SK-N-SH (cell line): ENCODE measurements at regions of chr7 and their contacts with region 1.

Region 1: GRCh38 chr7:43729214-43729923 is at the start of gene COA1:
- DNase-seq: peak; percentile 95
- H3K4me3 ChIP-seq: peak within 1 kb of the TSS; percentile 93 to 97
- H3K27ac ChIP-seq: peak within 1 kb of the TSS; percentile 68 to 95
- H3K4me1 ChIP-seq: peaks cover 0 to 7% of the 10 kb centered on the region in 2 experiments; a peak in 1 of 4 replicates
- H3K27me3 ChIP-seq: no peaks in the 10 kb centered on the region
- CTCF ChIP-seq: peak; percentile 19; the same call in 1 of the 2 replicates
- EP300 ChIP-seq: no peak; a peak in 1 of 4 replicates
- RAD21 ChIP-seq: no peak
- polyA plus RNA-seq, gene COA1: 42.8 and 66.3 TPM in 2 replicates

Region 2: GRCh38 chr7:43431020-43431595 is 298.3 kb before region 1 on chr7:
- CTCF ChIA-PET with region 1: no interaction called
- POLR2A ChIA-PET with region 1: no interaction called
- DNase-seq: no peak
- H3K4me3 ChIP-seq: no peak overlapping the region
- H3K27ac ChIP-seq: no peak overlapping the region
- H3K4me1 ChIP-seq: no peaks in the 10 kb centered on the region
- H3K27me3 ChIP-seq: no peaks in the 10 kb centered on the region; the same call in 1 of the 2 replicates
- CTCF ChIP-seq: no peak
- EP300 ChIP-seq: no peak
- RAD21 ChIP-seq: no peak

Region 3: DNA sequence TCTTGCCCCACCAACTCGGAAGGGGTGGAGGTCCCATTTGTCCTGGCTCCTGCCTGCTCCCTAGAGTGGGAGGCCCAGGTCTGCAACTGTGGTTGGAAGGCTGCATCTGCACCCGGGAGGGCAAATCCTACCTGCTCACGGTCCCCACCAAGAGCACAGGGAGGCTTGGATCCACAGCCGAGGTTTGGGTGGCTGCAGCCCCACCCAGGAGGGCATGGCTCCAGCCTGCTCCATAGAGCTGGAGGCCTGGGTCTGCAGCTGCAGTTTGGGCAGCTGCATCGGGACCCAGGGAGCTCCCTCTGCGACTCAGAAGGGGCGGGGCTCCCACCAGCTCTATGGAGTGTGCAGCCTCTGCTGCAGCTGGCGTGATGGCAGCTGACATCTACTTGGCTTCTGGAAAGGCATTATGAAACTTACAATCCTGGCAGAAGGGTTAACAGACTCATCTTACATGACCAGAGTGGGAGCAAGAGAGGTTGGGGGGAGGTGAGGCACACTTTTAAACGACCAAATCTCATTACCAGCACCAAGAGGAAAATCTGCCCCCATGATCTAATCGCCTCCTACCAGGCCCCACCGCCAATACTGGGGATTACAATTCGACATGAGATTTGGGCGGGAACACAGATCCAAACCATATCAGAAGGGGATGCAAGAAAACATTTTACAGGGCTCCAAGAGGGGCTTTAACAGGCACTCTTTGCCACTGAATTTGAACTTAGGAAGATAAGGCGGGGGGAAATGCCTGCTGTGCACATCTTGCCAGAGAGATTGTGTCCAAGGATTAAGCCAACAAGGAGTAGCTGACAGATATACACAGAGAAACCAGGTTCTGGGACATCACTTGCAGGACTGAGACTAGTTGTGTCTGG is 20.9 kb after region 1 on chr7:
- CTCF ChIA-PET with region 1: interaction called, 4 read pairs
- POLR2A ChIA-PET with region 1: interaction called, 11 read pairs
- DNase-seq: no peak
- H3K4me3 ChIP-seq: no peak overlapping the region
- H3K27ac ChIP-seq: no peak overlapping the region
- H3K4me1 ChIP-seq: peaks cover 0 to 3% of the 10 kb centered on the region in 2 experiments; a peak in 1 of 4 replicates
- H3K27me3 ChIP-seq: peaks cover 11% of the 10 kb centered on the region; the same call in 1 of the 2 replicates
- CTCF ChIP-seq: no peak
- EP300 ChIP-seq: no peak
- RAD21 ChIP-seq: no peak

Region 4: DNA sequence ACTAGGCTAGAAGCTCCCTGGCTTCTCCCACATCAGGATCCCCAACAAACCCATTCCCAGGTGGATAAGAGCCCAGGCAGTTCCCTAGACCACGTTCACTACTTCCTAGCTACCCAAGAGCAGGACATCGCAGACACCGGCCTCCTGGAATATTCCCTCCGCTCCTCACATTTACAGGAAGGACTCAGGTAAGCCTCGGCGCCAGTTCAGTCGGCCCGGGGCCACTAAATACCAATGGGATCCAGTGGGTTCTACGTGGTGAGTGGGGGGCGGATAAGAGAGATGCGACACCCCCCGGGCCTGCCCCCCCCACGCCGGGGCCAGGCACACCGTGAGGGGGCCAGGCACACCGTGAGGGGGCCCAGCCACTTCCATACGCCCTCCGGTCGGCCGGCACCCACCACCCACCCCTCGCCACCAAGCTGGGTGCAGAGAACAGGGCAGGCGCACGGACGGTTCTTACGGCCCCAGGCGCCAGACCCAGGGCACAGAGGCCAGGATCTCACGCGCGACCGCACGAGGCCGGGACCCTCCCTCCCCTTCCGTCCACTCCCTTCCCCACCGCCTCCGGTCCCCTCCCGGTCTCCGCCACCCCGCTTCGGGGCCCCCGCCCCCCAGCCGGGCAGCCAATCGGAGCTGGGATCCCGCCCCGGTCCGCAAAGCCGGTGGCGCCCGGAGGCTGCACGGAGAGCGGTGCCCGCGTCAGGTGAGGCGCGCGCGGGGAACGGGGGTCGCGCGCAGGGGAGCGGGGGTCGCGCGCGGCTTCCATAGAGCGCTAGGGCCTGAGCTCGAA is 28.9 kb after region 1 on chr7 and contains the start of gene BLVRA:
- CTCF ChIA-PET with region 1: interaction called, 4 read pairs
- POLR2A ChIA-PET with region 1: interaction called, 11 read pairs
- DNase-seq: peak; percentile 100
- H3K4me3 ChIP-seq: peak within 1 kb of the TSS; percentile 74 to 83
- H3K27ac ChIP-seq: peak within 1 kb of the TSS; percentile 66 to 75
- H3K4me1 ChIP-seq: peaks cover 4 to 14% of the 10 kb centered on the region in 2 experiments; a peak in 2 of 4 replicates
- H3K27me3 ChIP-seq: no peaks in the 10 kb centered on the region
- CTCF ChIP-seq: no peak
- EP300 ChIP-seq: no peak
- RAD21 ChIP-seq: no peak
- polyA plus RNA-seq, gene BLVRA: 111 and 123 TPM in 2 replicates